ENCODE measurements at regions of chr11 and their contacts with region 1.

Region 1: GRCh38 chr11:6022956-6023355 is 7.6 kb downstream of the OR56A1 start:
- DNase-seq: peak in 4 of 14 experiments; percentile 13 to 63 (median 54)
- ATAC-seq: peak; percentile 43
- H3K4me3 ChIP-seq: no peak overlapping the region
- H3K4me3 Mint-ChIP-seq: no peak overlapping the region
- H3K27ac ChIP-seq: no peak overlapping the region
- H3K27ac Mint-ChIP-seq: no peak overlapping the region
- H3K4me1 ChIP-seq: no peaks in the 10 kb centered on the region
- H3K4me1 Mint-ChIP-seq: no peaks in the 10 kb centered on the region
- H3K27me3 ChIP-seq: peaks cover 4 to 6% of the 10 kb centered on the region in 2 experiments
- H3K27me3 Mint-ChIP-seq: peaks cover 57% of the 10 kb centered on the region
- CTCF ChIP-seq: peak; percentile 41

Region 2: GRCh38 chr11:5994791-5995190 is 28.2 kb before region 1 on chr11:
- CTCF ChIA-PET with region 1: no interaction called
- POLR2A ChIA-PET with region 1: no interaction called
- intact Hi-C with region 1: no loop called
- DNase-seq: no peak
- ATAC-seq: no peak
- H3K4me3 ChIP-seq: no peak overlapping the region
- H3K4me3 Mint-ChIP-seq: no peak overlapping the region
- H3K27ac ChIP-seq: no peak overlapping the region
- H3K27ac Mint-ChIP-seq: no peak overlapping the region
- H3K4me1 ChIP-seq: no peaks in the 10 kb centered on the region
- H3K4me1 Mint-ChIP-seq: no peaks in the 10 kb centered on the region
- H3K27me3 ChIP-seq: peaks cover 0 to 3% of the 10 kb centered on the region in 2 experiments
- H3K27me3 Mint-ChIP-seq: peaks cover 13% of the 10 kb centered on the region
- CTCF ChIP-seq: no peak

Region 3: GRCh38 chr11:6315811-6316425 is 293.0 kb after region 1 on chr11:
- CTCF ChIA-PET with region 1: no interaction called
- POLR2A ChIA-PET with region 1: no interaction called
- intact Hi-C with region 1: loop called (anchors 1 to 2 kb)
- DNase-seq: peak in 6 of 14 experiments; percentile 2 to 58 (median 24)
- ATAC-seq: peak; percentile 48
- H3K4me3 ChIP-seq: no peak overlapping the region
- H3K4me3 Mint-ChIP-seq: no peak overlapping the region
- H3K27ac ChIP-seq: no peak overlapping the region
- H3K27ac Mint-ChIP-seq: no peak overlapping the region
- H3K4me1 ChIP-seq: peaks cover 20% of the 10 kb centered on the region
- H3K4me1 Mint-ChIP-seq: peaks cover 5% of the 10 kb centered on the region
- H3K27me3 ChIP-seq: peaks cover 37 to 46% of the 10 kb centered on the region in 2 experiments
- H3K27me3 Mint-ChIP-seq: peaks cover 59% of the 10 kb centered on the region
- CTCF ChIP-seq: peak; percentile 58